ENCODE measurements at regions of chr12 and their contacts with region 1.

Region 1: DNA sequence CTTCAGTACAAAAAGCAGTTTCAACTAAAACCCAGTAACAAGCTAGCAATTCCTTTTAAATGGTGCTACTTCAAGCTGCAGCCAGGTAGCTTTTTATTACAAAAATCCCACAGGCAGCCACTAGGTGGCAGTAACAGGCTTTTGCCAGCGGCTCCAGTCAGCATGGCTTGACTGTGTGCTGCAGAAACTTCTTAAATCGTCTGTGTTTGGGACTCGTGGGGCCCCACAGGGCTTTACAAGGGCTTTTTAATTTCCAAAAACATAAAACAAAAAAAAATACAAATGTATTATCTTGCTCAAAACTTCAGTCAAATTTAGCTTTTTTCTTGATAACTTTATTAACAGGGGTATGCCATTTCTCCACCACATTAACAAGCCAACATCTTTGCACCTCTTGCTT is 3.6 kb upstream of the CLEC4E start:
- DNase-seq: peak; percentile 83
- ATAC-seq: peak; percentile 73
- H3K4me3 Mint-ChIP-seq: no peak overlapping the region
- H3K27ac Mint-ChIP-seq: no peak overlapping the region
- H3K4me1 Mint-ChIP-seq: peaks cover 3% of the 10 kb centered on the region
- H3K27me3 Mint-ChIP-seq: peaks cover 22% of the 10 kb centered on the region

Region 2: DNA sequence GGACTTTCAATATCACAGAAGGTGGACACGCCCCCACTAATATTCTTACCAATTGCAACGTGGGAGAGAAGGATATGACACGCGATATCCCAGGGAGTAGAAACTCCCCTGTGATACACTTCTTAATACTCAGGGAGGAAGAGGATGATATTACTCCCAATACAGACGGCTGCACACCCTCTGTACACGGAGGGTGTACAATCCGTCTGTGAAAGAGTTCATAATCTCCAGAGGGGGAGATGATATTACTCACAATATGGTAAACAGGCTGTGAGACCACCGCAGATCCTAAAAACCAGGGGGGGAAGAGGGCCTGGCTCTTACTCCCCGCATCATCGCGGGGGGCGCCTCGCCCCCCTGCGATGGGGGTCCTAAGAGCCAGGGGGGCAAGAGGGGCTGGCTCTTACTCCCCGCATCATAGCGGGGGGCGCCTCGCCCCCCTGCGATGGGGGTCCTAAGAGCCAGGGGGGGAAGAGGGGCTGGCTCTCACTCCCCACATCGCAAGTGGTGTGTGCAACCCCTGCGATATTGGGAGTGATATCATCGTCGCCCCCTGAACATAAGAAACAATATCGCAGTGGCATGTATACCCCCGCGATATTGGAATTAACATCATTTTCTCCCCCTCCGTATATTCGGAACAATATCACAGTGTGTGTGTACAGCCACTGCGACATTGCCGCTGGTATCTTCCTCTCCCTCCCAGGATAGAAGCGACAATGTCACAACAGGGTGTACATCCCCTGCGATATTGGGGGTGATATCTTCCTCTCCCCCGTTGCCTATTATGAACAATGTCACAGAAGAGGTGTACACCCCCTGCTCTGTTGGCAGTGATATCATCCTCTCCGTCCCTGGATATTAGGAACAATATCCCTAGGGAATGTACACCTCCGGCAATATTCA is 97.4 kb before region 1 on chr12:
- CTCF ChIA-PET with region 1: no interaction called
- POLR2A ChIA-PET with region 1: no interaction called
- intact Hi-C with region 1: no loop called
- DNase-seq: peak; percentile 43
- ATAC-seq: peak; percentile 49
- H3K4me3 Mint-ChIP-seq: no peak overlapping the region
- H3K27ac Mint-ChIP-seq: no peak overlapping the region
- H3K4me1 Mint-ChIP-seq: no peaks in the 10 kb centered on the region
- H3K27me3 Mint-ChIP-seq: peaks cover 3% of the 10 kb centered on the region

Region 3: GRCh38 chr12:8527250-8528130 is 16.8 kb before region 1 on chr12:
- CTCF ChIA-PET with region 1: interaction called, 19 read pairs
- POLR2A ChIA-PET with region 1: no interaction called
- intact Hi-C with region 1: no loop called
- DNase-seq: no peak
- ATAC-seq: no peak
- H3K4me3 Mint-ChIP-seq: no peak overlapping the region
- H3K27ac Mint-ChIP-seq: no peak overlapping the region
- H3K4me1 Mint-ChIP-seq: no peaks in the 10 kb centered on the region
- H3K27me3 Mint-ChIP-seq: peaks cover 26% of the 10 kb centered on the region

Region 4: DNA sequence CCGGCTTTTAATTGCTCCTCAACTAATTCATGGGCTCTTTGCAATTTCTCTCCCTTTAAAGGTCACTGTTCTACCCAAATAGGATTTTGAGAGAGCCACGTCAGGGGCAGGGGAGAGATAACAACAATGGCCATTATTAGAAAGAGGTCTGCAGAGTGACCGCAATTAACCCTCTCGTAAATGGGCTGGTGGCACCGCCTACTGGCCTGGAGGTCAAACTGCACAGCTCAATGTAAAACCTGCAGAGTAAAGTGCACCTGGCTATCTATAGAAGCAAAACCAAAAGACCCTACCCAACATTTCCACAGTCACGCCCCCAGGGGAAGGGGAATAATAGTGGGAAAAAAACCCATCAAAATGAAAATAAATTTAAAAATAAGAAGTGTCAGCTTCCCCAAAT is 18.0 kb after region 1 on chr12:
- CTCF ChIA-PET with region 1: interaction called, 24 read pairs
- POLR2A ChIA-PET with region 1: no interaction called
- intact Hi-C with region 1: no loop called
- DNase-seq: peak; percentile 14
- ATAC-seq: no peak
- H3K4me3 Mint-ChIP-seq: no peak overlapping the region
- H3K27ac Mint-ChIP-seq: no peak overlapping the region
- H3K4me1 Mint-ChIP-seq: no peaks in the 10 kb centered on the region
- H3K27me3 Mint-ChIP-seq: peaks cover 5% of the 10 kb centered on the region

Region 5: DNA sequence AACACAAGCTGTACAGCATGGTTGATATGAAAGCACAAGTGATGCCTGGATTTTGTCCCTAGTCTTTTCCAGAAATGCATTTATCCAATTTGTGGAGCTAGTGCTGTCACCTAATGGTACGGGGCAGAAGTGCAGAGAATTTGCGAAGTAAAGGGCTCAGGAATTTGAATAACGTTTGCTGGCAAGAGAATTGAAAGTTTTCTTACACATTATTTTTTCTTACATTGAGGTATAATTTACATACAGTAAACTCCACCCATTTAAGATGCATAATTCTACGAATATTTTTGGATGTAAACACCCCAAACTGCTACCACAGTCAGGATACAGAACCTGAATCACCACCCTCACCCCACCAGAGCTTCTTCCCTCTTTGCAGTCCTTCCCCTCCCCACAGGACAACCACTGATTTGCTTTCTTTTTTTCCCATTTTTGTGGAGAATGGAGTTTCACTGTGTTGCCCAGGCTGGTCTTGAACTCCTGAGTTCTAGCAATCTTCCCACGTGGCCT is 64.8 kb after region 1 on chr12:
- CTCF ChIA-PET with region 1: interaction called, 16 read pairs
- POLR2A ChIA-PET with region 1: no interaction called
- intact Hi-C with region 1: loop called (anchors 1 to 2 kb)
- DNase-seq: peak; percentile 18
- ATAC-seq: no peak
- H3K4me3 Mint-ChIP-seq: no peak overlapping the region
- H3K27ac Mint-ChIP-seq: no peak overlapping the region
- H3K4me1 Mint-ChIP-seq: peaks cover 11% of the 10 kb centered on the region
- H3K27me3 Mint-ChIP-seq: peaks cover 15% of the 10 kb centered on the region

Region 6: DNA sequence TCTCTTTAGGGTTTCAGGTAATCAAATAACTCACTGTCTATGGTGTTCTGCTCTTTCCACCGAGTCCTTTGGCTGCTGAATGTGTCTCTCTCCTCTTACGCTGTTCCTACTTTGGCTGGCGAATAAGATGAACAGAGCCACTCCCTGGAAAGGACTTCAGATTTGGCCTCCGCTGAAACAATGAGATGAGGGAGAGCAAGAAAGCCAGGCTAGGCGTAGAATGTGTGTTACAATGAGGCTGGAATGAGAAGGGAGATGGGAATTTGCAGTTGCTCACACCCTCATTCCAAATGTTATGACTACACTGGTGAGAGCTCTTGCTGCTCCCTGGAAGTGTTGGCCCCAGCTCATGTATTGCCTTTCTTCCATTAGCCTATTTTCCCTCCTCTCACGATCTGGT is 118.3 kb after region 1 on chr12 and contains the start of gene MFAP5:
- CTCF ChIA-PET with region 1: interaction called, 12 read pairs
- POLR2A ChIA-PET with region 1: no interaction called
- intact Hi-C with region 1: no loop called
- DNase-seq: no peak
- ATAC-seq: no peak
- H3K4me3 Mint-ChIP-seq: no peak within 1 kb of the TSS
- H3K27ac Mint-ChIP-seq: no peak within 1 kb of the TSS
- H3K4me1 Mint-ChIP-seq: no peaks in the 10 kb centered on the region
- H3K27me3 Mint-ChIP-seq: peaks cover 4% of the 10 kb centered on the region
- total RNA-seq, gene MFAP5: not detected

Region 7: GRCh38 chr12:8890313-8891085 is 346.2 kb after region 1 on chr12:
- CTCF ChIA-PET with region 1: interaction called, 21 read pairs
- POLR2A ChIA-PET with region 1: no interaction called
- intact Hi-C with region 1: loop called (anchors 1 to 2 kb)
- DNase-seq: peak; percentile 75
- ATAC-seq: peak; percentile 74
- H3K4me3 Mint-ChIP-seq: peak overlapping the region; percentile 72
- H3K27ac Mint-ChIP-seq: no peak overlapping the region
- H3K4me1 Mint-ChIP-seq: peaks cover 3% of the 10 kb centered on the region
- H3K27me3 Mint-ChIP-seq: no peaks in the 10 kb centered on the region

Measured in activated CD4-positive, alpha-beta T cell treated with anti-CD3 and anti-CD28 coated beads for 36 hours (primary cell).